ENCODE measurements at regions of chr12 and their contacts with region 1.

Region 1: DNA sequence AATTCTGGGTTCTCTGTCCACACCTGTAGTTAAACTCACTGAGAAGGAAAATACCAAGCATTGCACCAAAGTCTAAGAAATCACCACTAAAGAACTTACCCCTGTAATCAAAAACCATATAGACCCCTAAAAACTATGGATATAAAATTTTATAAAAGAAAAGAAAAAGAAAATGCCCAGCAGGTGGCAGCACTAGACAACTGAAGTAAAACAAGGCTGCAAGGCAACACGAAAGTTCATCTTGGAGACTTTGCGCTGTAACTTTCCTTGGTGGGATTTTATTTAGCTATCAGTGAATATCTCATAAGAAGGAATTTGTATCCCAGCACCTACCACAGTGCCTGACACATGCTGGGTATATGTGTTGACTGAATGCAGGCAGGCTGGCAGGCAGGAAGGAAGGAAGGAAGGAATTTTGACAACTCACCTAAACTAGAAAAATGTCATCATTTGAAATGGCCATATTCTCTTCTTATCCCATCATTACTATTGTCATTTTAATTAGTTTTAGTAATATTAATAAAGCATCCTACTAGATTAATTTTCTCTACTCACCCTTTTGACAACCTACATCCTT is 68.2 kb upstream of the ETV6 start:
- DNase-seq: peak; percentile 78
- ATAC-seq: no peak
- H3K4me3 ChIP-seq: no peak overlapping the region
- H3K4me3 Mint-ChIP-seq: no peak overlapping the region
- H3K27ac ChIP-seq: no peak overlapping the region
- H3K27ac Mint-ChIP-seq: no peak overlapping the region
- H3K4me1 ChIP-seq: peaks cover 5 to 11% of the 10 kb centered on the region in 2 donors
- H3K4me1 Mint-ChIP-seq: peaks cover 7% of the 10 kb centered on the region
- H3K27me3 ChIP-seq: no peaks in the 10 kb centered on the region
- H3K27me3 Mint-ChIP-seq: peaks cover 15% of the 10 kb centered on the region
- CTCF ChIP-seq: peak; percentile 86

Region 2: GRCh38 chr12:11486623-11487444 is 94.4 kb before region 1 on chr12:
- CTCF ChIA-PET with region 1: no interaction called
- POLR2A ChIA-PET with region 1: no interaction called
- intact Hi-C with region 1: no loop called
- DNase-seq: peak; percentile 87
- ATAC-seq: peak; percentile 95
- H3K4me3 ChIP-seq: no peak overlapping the region
- H3K4me3 Mint-ChIP-seq: no peak overlapping the region
- H3K27ac ChIP-seq: no peak overlapping the region
- H3K27ac Mint-ChIP-seq: no peak overlapping the region
- H3K4me1 ChIP-seq: peaks cover 4 to 8% of the 10 kb centered on the region in 2 donors
- H3K4me1 Mint-ChIP-seq: peaks cover 2% of the 10 kb centered on the region
- H3K27me3 ChIP-seq: no peaks in the 10 kb centered on the region
- H3K27me3 Mint-ChIP-seq: peaks cover 31% of the 10 kb centered on the region
- CTCF ChIP-seq: peak; percentile 100

Region 3: GRCh38 chr12:11553871-11554533 is 27.3 kb before region 1 on chr12:
- CTCF ChIA-PET with region 1: interaction called, 17 read pairs
- POLR2A ChIA-PET with region 1: no interaction called
- intact Hi-C with region 1: loop called (anchors 1 kb)
- DNase-seq: peak; percentile 70
- ATAC-seq: peak; percentile 63
- H3K4me3 ChIP-seq: no peak overlapping the region
- H3K4me3 Mint-ChIP-seq: no peak overlapping the region
- H3K27ac ChIP-seq: no peak overlapping the region
- H3K27ac Mint-ChIP-seq: no peak overlapping the region
- H3K4me1 ChIP-seq: peaks cover 0 to 3% of the 10 kb centered on the region in 2 donors
- H3K4me1 Mint-ChIP-seq: peaks cover 5% of the 10 kb centered on the region
- H3K27me3 ChIP-seq: no peaks in the 10 kb centered on the region
- H3K27me3 Mint-ChIP-seq: peaks cover 16% of the 10 kb centered on the region
- CTCF ChIP-seq: peak; percentile 75

Region 4: GRCh38 chr12:11595080-11595479 is 13.8 kb after region 1 on chr12:
- CTCF ChIA-PET with region 1: interaction called, 10 read pairs
- POLR2A ChIA-PET with region 1: no interaction called
- intact Hi-C with region 1: no loop called
- DNase-seq: no peak
- ATAC-seq: no peak
- H3K4me3 ChIP-seq: no peak overlapping the region
- H3K4me3 Mint-ChIP-seq: no peak overlapping the region
- H3K27ac ChIP-seq: no peak overlapping the region
- H3K27ac Mint-ChIP-seq: no peak overlapping the region
- H3K4me1 ChIP-seq: peaks cover 3 to 5% of the 10 kb centered on the region in 2 donors
- H3K4me1 Mint-ChIP-seq: peaks cover 1% of the 10 kb centered on the region
- H3K27me3 ChIP-seq: no peaks in the 10 kb centered on the region
- H3K27me3 Mint-ChIP-seq: peaks cover 3% of the 10 kb centered on the region
- CTCF ChIP-seq: no peak

Region 5: GRCh38 chr12:11655842-11656241 is 74.6 kb after region 1 on chr12:
- CTCF ChIA-PET with region 1: no interaction called
- POLR2A ChIA-PET with region 1: no interaction called
- intact Hi-C with region 1: no loop called
- DNase-seq: no peak
- ATAC-seq: no peak
- H3K4me3 ChIP-seq: no peak overlapping the region
- H3K4me3 Mint-ChIP-seq: no peak overlapping the region
- H3K27ac ChIP-seq: no peak overlapping the region
- H3K27ac Mint-ChIP-seq: no peak overlapping the region
- H3K4me1 ChIP-seq: peaks cover 56 to 58% of the 10 kb centered on the region in 2 donors
- H3K4me1 Mint-ChIP-seq: peaks cover 86% of the 10 kb centered on the region
- H3K27me3 ChIP-seq: no peaks in the 10 kb centered on the region
- H3K27me3 Mint-ChIP-seq: no peaks in the 10 kb centered on the region
- CTCF ChIP-seq: no peak

Region 6: GRCh38 chr12:11672256-11673191 is 91.3 kb after region 1 on chr12:
- CTCF ChIA-PET with region 1: no interaction called
- POLR2A ChIA-PET with region 1: no interaction called
- intact Hi-C with region 1: no loop called
- DNase-seq: no peak
- ATAC-seq: no peak
- H3K4me3 ChIP-seq: no peak overlapping the region
- H3K4me3 Mint-ChIP-seq: no peak overlapping the region
- H3K27ac ChIP-seq: no peak overlapping the region
- H3K27ac Mint-ChIP-seq: no peak overlapping the region
- H3K4me1 ChIP-seq: peaks cover 42% of the 10 kb centered on the region in 2 donors
- H3K4me1 Mint-ChIP-seq: peaks cover 78% of the 10 kb centered on the region
- H3K27me3 ChIP-seq: no peaks in the 10 kb centered on the region
- H3K27me3 Mint-ChIP-seq: no peaks in the 10 kb centered on the region
- CTCF ChIP-seq: no peak

Region 7: GRCh38 chr12:11862798-11863197 is 281.5 kb after region 1 on chr12:
- CTCF ChIA-PET with region 1: no interaction called
- POLR2A ChIA-PET with region 1: no interaction called
- intact Hi-C with region 1: no loop called
- DNase-seq: no peak
- ATAC-seq: no peak
- H3K4me3 ChIP-seq: no peak overlapping the region
- H3K4me3 Mint-ChIP-seq: no peak overlapping the region
- H3K27ac ChIP-seq: no peak overlapping the region
- H3K27ac Mint-ChIP-seq: no peak overlapping the region
- H3K4me1 ChIP-seq: no peaks in the 10 kb centered on the region
- H3K4me1 Mint-ChIP-seq: peaks cover 5% of the 10 kb centered on the region
- H3K27me3 ChIP-seq: no peaks in the 10 kb centered on the region
- H3K27me3 Mint-ChIP-seq: no peaks in the 10 kb centered on the region
- CTCF ChIP-seq: no peak

Region 8: DNA sequence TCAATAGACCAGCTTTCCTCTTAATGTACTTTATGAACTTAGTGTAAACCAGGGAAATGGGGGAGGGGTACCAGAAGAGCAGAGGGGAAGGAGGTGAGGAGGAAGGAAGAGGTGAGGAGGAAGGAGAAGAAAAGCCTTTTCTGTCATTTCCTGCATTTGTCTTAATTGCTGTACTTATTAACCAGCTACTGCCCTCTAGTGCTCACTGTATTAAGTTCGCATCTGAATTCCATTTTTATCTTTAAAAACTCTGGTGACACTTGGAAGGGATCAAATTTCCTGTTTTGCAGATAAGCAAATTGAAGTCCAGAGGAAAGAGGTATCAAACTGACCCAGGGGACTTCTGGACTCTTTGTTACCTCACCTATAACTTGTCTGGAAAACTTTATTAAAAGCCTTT is 746.5 kb after region 1 on chr12:
- CTCF ChIA-PET with region 1: interaction called, 26 read pairs
- POLR2A ChIA-PET with region 1: no interaction called
- intact Hi-C with region 1: loop called (anchors 1 kb)
- DNase-seq: peak; percentile 63
- ATAC-seq: peak; percentile 47
- H3K4me3 ChIP-seq: no peak overlapping the region
- H3K4me3 Mint-ChIP-seq: no peak overlapping the region
- H3K27ac ChIP-seq: no peak overlapping the region
- H3K27ac Mint-ChIP-seq: no peak overlapping the region
- H3K4me1 ChIP-seq: no peaks in the 10 kb centered on the region
- H3K4me1 Mint-ChIP-seq: peaks cover 2% of the 10 kb centered on the region
- H3K27me3 ChIP-seq: no peaks in the 10 kb centered on the region
- H3K27me3 Mint-ChIP-seq: peaks cover 25% of the 10 kb centered on the region
- CTCF ChIP-seq: peak; percentile 77

Region 9: DNA sequence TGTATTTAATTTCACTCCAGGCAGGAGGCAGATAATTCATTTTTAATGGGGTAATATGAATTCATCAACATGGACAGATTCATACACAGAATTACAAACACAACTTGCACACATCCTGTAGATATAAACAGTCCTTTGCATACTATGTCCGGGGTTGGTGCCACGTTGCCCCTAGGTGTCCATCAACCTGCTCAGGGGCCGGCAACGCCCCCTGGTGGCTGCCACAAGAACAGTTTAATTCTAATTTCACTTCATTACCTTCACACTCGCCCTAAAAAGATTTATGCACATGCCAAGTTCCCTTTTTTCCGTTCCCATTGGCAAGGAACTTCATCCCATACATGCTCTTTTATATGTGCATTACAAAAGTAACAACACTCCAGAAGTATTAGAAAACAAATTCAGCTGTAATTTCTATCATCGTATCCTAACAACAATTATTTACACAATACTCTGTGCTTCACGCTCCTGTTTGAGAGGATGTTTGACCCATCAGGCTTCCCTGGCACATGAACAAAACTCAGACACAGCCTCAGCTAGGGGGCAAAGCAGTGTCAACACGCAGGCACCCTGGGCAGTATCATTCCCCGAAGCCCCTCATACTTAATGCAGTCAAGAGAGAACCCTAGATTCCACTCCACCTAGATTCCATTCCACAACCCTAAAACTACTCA is 753.2 kb after region 1 on chr12:
- CTCF ChIA-PET with region 1: interaction called, 26 read pairs
- POLR2A ChIA-PET with region 1: no interaction called
- intact Hi-C with region 1: loop called (anchors 2 kb)
- DNase-seq: peak; percentile 70
- ATAC-seq: peak; percentile 68
- H3K4me3 ChIP-seq: no peak overlapping the region
- H3K4me3 Mint-ChIP-seq: no peak overlapping the region
- H3K27ac ChIP-seq: no peak overlapping the region
- H3K27ac Mint-ChIP-seq: no peak overlapping the region
- H3K4me1 ChIP-seq: peaks cover 4 to 10% of the 10 kb centered on the region in 2 donors
- H3K4me1 Mint-ChIP-seq: peaks cover 7% of the 10 kb centered on the region
- H3K27me3 ChIP-seq: no peaks in the 10 kb centered on the region
- H3K27me3 Mint-ChIP-seq: peaks cover 16% of the 10 kb centered on the region
- CTCF ChIP-seq: peak; percentile 89